Activated CD8-positive, alpha-beta T cell treated with anti-CD3 and anti-CD28 coated beads for 36 hours (primary cell): ENCODE measurements at regions of chr3 and their contacts with region 1.

Region 1: GRCh38 chr3:69120879-69121464 is 1.4 kb downstream of the LMOD3 start:
- DNase-seq: peak; percentile 93
- ATAC-seq: peak; percentile 96
- H3K4me3 Mint-ChIP-seq: no peak overlapping the region
- H3K27ac Mint-ChIP-seq: no peak overlapping the region
- H3K4me1 Mint-ChIP-seq: peaks cover 5% of the 10 kb centered on the region
- H3K27me3 Mint-ChIP-seq: no peaks in the 10 kb centered on the region
- CTCF ChIP-seq: peak; percentile 96

Region 2: DNA sequence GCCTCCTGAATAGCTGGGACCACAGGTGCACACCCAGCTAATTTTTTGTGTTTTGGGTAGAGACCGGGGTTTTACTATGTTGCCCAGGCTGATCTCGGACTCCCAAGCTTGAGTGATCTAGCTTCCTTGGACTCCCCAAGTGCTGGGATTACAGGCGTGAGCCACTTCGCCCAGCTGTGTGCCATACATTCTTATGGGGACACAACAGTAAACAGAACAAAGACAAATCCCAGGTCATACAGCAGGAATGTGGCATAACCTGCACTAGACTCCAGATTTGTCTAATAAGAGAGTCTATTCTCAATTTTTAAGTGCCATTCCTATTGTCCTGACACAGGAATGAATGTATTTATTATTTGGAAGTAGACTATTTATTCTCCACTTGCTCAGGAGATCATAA is 18.6 kb before region 1 on chr3:
- CTCF ChIA-PET with region 1: interaction called, 33 read pairs
- POLR2A ChIA-PET with region 1: interaction called, 3 read pairs
- intact Hi-C with region 1: no loop called
- DNase-seq: no peak
- ATAC-seq: no peak
- H3K4me3 Mint-ChIP-seq: no peak overlapping the region
- H3K27ac Mint-ChIP-seq: no peak overlapping the region
- H3K4me1 Mint-ChIP-seq: peaks cover 49% of the 10 kb centered on the region
- H3K27me3 Mint-ChIP-seq: no peaks in the 10 kb centered on the region
- CTCF ChIP-seq: no peak

Region 3: DNA sequence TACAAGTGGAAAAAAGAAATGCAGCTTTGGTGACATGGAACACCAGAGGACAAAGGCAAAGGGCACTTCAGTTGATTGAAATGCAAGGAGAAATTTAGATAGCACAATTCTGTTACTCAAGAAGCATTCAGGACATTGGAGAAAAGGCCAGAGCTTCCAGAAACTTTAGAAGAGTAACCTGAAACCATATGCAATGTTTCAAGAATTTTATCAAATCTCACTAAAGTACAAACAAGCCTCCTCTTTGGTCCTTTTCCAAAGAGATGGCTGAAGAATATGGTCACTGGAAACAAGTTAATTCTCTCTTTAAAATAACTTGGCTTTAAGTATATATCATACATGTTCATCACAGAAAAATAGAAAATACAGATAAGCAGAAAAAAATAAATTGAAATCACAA is 16.0 kb after region 1 on chr3:
- CTCF ChIA-PET with region 1: interaction called, 21 read pairs
- POLR2A ChIA-PET with region 1: no interaction called
- intact Hi-C with region 1: no loop called
- DNase-seq: no peak
- ATAC-seq: no peak
- H3K4me3 Mint-ChIP-seq: no peak overlapping the region
- H3K27ac Mint-ChIP-seq: no peak overlapping the region
- H3K4me1 Mint-ChIP-seq: no peaks in the 10 kb centered on the region
- H3K27me3 Mint-ChIP-seq: peaks cover 3% of the 10 kb centered on the region
- CTCF ChIP-seq: no peak

Region 4: GRCh38 chr3:69410250-69410649 is 289.3 kb after region 1 on chr3:
- CTCF ChIA-PET with region 1: interaction called, 23 read pairs
- POLR2A ChIA-PET with region 1: no interaction called
- intact Hi-C with region 1: no loop called
- DNase-seq: peak; percentile 86
- ATAC-seq: peak; percentile 97
- H3K4me3 Mint-ChIP-seq: no peak overlapping the region
- H3K27ac Mint-ChIP-seq: no peak overlapping the region
- H3K4me1 Mint-ChIP-seq: peaks cover 5% of the 10 kb centered on the region
- H3K27me3 Mint-ChIP-seq: peaks cover 6% of the 10 kb centered on the region
- CTCF ChIP-seq: peak; percentile 95